Naive thymus-derived CD8-positive, alpha-beta T cell (primary cell): ENCODE measurements at regions of chr15 and their contacts with region 1.

Region 1: DNA sequence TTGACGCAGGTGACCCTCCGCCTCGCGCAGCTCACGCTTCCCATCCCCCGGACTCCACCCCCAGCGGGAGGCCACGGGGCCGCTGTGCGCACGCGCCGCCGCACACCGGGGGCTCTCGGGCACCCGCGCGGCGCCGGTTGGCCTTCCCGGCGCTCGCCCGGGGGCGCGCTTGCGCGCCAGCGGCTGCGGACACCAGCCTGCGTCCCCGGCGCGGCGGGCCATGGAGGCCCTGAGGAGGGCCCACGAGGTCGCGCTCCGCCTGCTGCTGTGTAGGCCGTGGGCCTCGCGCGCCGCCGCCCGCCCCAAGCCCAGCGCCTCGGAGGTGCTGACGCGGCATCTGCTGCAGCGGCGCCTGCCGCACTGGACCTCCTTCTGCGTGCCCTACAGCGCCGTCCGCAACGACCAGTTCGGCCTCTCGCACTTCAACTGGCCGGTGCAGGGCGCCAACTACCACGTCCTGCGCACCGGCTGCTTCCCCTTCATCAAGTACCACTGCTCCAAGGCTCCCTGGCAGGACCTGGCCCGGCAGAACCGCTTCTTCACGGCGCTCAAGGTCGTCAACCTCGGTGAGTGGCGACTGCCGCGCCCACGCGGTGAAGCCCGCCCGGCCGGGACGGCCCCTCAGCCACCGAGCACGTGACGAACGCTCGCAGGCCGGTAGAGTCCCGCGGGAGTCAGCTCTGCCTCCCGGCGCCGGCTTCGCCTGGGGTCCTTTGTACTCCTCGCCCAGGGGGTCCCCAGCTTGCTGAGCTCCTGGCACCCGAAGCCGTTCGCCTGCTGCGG is at the start of gene C15orf61:
- DNase-seq: peak; percentile 72 to 91 (median 80)
- ATAC-seq: peak; percentile 79 to 84
- H3K4me3 Mint-ChIP-seq: peak within 1 kb of the TSS; percentile 88 to 96 (median 93)
- H3K27ac Mint-ChIP-seq: peak within 1 kb of the TSS; percentile 90 to 97 (median 95)
- H3K4me1 Mint-ChIP-seq: peaks cover 7 to 42% (median 28%) of the 10 kb centered on the region in 4 donors
- H3K27me3 Mint-ChIP-seq: no peaks in the 10 kb centered on the region
- polyA plus RNA-seq, gene C15orf61: 6.1 to 8.3 (median 6.4) TPM

Region 2: DNA sequence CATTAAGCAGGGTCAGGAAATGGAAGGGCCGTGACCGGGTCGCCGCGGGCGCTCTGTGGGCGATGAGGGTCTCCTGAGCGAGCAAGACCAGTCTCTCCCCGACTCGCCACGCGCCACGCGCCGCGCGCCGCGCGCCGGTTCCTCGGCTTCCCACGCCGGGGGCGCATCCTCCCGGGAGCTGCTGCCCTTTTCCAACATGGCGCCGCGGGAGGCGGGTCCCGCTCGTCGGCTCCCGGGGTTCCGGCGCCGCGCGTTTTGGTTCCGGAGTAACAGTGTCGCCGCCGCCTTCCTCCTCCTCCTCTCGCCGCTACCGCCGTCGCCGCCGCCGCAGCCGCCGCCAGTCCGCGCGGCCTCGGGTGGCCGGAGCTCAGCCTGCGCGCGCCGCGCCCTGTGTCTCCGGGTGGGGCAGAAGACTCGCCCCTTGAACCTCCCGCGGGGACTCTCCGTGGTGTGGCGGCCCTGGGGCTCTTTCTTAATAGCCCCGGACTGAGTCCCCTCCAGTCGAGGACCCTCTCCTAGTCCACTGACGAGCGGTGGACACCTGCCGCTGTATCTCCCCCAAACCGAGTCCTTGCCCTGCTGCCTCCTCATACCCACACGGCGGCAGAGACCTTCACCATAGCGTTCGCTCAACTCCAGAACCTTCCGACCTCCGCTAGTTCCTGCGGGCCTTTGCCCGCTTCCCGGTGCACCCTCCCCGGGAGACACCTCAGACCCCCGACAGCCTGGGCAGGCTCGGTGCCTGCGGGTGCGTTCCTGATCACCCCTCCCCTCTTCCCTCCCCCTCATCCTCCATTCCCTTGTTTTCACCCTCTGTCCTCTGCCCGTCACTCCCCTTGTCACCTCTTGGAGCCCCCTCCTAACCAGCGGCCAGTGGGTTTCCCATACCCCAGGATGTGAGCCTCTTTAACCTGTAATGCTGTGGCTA is 21.5 kb after region 1 on chr15 and contains the start of gene MAP2K5:
- POLR2A ChIA-PET with region 1: interaction called, 71 read pairs
- DNase-seq: peak; percentile 63 to 88 (median 77)
- ATAC-seq: peak; percentile 68 to 83
- H3K4me3 Mint-ChIP-seq: peak within 1 kb of the TSS; percentile 91 to 98 (median 96)
- H3K27ac Mint-ChIP-seq: peak within 1 kb of the TSS; percentile 98 to 99 (median 98)
- H3K4me1 Mint-ChIP-seq: peaks cover 19 to 68% (median 52%) of the 10 kb centered on the region in 4 donors
- H3K27me3 Mint-ChIP-seq: no peaks in the 10 kb centered on the region
- polyA plus RNA-seq, gene MAP2K5: 17.8 to 22.5 (median 21.2) TPM